CD14-positive monocyte (primary cell): ENCODE measurements at regions of chr17 and their contacts with region 1.

Region 1: GRCh38 chr17:58219001-58219788 is at the start of gene MKS1:
- DNase-seq: peak; percentile 89 to 93 (median 92)
- H3K4me3 ChIP-seq: peak within 1 kb of the TSS; percentile 86 to 93 (median 86)
- H3K4me3 Mint-ChIP-seq: peak within 1 kb of the TSS; percentile 91 to 97
- H3K27ac ChIP-seq: peak within 1 kb of the TSS; percentile 70 to 84
- H3K27ac Mint-ChIP-seq: peak within 1 kb of the TSS; percentile 90 to 96 (median 95)
- H3K4me1 ChIP-seq: peaks cover 13 to 18% of the 10 kb centered on the region in 2 donors
- H3K4me1 Mint-ChIP-seq: peaks cover 15% of the 10 kb centered on the region
- H3K27me3 ChIP-seq: no peaks in the 10 kb centered on the region
- H3K27me3 Mint-ChIP-seq: peaks cover 0 to 7% (median 4%) of the 10 kb centered on the region in 3 donors
- CTCF ChIP-seq: peak; percentile 75
- polyA plus RNA-seq, gene MKS1: 4.2 to 7.6 (median 5.0) TPM

Region 2: DNA sequence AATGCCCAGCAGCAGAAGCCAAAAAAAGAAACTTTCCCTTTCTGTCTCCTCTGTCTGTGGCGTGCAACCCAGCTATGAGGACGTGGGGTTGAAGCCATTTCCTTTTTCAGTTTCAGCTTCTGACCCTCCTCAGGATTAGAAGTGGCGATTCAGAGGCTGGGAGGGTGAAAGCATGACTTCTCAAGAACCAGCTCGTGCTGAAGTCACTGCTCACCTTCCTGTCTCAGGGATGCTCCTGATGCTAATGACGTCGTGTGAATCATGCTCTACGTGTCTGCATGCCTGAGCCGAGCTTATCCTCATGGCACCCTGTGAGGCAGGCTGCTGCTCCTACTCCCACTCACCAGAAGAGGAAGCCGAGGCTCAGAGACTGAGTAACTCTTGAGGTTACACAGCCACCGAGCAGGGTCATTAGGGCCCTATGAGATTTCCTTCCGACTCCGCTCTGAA is 13.5 kb after region 1 on chr17:
- intact Hi-C with region 1: loop called in 1 of 2 experiments (anchors 2 kb)
- DNase-seq: peak; percentile 94 to 99 (median 96)
- H3K4me3 ChIP-seq: peak overlapping the region; percentile 18 to 68 (median 29)
- H3K4me3 Mint-ChIP-seq: peak overlapping the region; percentile 75 to 90
- H3K27ac ChIP-seq: peak overlapping the region; percentile 83 to 90
- H3K27ac Mint-ChIP-seq: peak overlapping the region; percentile 91 to 97 (median 93)
- H3K4me1 ChIP-seq: peaks cover 27 to 35% of the 10 kb centered on the region in 2 donors
- H3K4me1 Mint-ChIP-seq: peaks cover 32% of the 10 kb centered on the region
- H3K27me3 ChIP-seq: peaks cover 6 to 17% of the 10 kb centered on the region in 2 donors
- H3K27me3 Mint-ChIP-seq: peaks cover 26 to 37% (median 29%) of the 10 kb centered on the region in 3 donors
- CTCF ChIP-seq: no peak